PC-9 (cell line): ENCODE measurements at regions of chr3 and their contacts with region 1.

Region 1: GRCh38 chr3:64104674-64105111 is 81.4 kb upstream of the PSMD6 start:
- DNase-seq: peak; percentile 36 to 87
- H3K4me3 ChIP-seq: no peak overlapping the region
- H3K27ac ChIP-seq: peak overlapping the region; percentile 65
- H3K4me1 ChIP-seq: peaks cover 23% of the 10 kb centered on the region
- H3K27me3 ChIP-seq: no peaks in the 10 kb centered on the region
- CTCF ChIP-seq: no peak

Region 2: DNA sequence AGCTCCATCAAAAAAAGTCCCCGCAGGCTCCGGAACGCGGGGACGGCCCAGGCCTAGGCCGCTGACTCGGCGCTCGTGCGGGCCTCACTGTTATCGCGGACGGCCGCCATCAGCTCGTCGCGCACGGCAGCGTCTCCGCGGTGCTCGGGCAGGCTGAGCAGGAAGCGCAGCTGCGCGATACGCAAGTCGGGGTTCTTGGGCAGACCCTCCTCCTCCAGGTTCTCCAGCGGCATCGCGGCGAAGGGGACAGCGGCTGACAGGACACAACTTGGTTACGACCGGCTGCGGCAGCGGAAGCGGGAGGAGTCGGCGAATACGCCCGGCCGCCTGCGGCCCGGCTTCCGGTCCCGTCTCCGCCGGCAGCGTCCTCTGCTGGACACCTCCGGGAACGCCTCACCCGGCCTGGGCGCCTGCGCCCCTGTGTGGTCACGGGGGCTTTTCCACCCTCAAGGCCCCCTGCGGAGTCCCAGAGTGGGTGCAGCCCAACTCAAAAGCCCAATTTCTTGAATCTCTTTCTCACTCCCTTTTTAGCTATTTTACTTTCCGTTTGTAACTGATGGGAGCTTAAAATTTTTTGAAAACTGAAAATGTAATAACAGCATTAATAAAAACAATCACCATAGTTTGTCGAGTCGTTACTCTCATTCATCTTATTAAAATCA is 81.4 kb before region 1 on chr3 and contains the start of gene PSMD6:
- CTCF ChIA-PET with region 1: no interaction called
- POLR2A ChIA-PET with region 1: no interaction called
- intact Hi-C with region 1: no loop called
- DNase-seq: peak; percentile 55 to 91
- H3K4me3 ChIP-seq: peak within 1 kb of the TSS; percentile 91
- H3K27ac ChIP-seq: peak within 1 kb of the TSS; percentile 54
- H3K4me1 ChIP-seq: peaks cover 7% of the 10 kb centered on the region
- H3K27me3 ChIP-seq: no peaks in the 10 kb centered on the region
- CTCF ChIP-seq: peak; percentile 88
- total RNA-seq, gene PSMD6: 52.0 and 68.8 TPM in 2 replicates

Region 3: GRCh38 chr3:64174328-64174727 is 69.6 kb after region 1 on chr3:
- CTCF ChIA-PET with region 1: interaction called, 3 read pairs
- POLR2A ChIA-PET with region 1: no interaction called
- intact Hi-C with region 1: loop called (anchors 5 kb)
- DNase-seq: peak; percentile 65 to 66
- H3K4me3 ChIP-seq: no peak overlapping the region
- H3K27ac ChIP-seq: 0 out of 2 replicates have a peak overlapping the region, but pooled peaks have one; percentile 17
- H3K4me1 ChIP-seq: peaks cover 24% of the 10 kb centered on the region
- H3K27me3 ChIP-seq: no peaks in the 10 kb centered on the region
- CTCF ChIP-seq: no peak